ENCODE measurements at regions of chr6 and their contacts with region 1.

Region 1: DNA sequence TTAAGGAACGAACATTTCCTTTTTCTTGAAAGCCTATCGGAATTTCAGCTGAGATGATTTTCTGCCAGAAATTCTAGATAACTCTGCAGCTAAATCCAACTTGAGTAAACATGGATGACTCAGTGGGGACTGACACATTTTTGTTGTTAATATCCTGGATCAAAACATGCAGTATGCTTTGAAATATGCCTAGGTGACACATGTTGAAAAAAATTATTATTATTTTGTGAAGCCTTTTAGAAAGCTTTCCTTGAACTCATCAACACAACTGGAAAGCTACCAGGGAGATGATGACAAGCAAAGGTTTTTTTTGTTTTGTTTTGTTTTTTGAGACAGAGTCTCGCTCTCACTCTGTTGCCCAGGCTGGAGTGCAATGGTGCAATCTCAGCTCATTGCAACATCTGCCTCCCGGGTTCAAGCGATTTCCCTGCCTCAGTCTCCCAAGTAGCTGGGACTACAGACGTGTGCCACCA is 140.1 kb upstream of the SNX9 start:
- DNase-seq: no peak
- H3K4me3 ChIP-seq: no peak overlapping the region
- H3K27ac ChIP-seq: no peak overlapping the region
- H3K4me1 ChIP-seq: no peaks in the 10 kb centered on the region
- H3K27me3 ChIP-seq: no peaks in the 10 kb centered on the region
- CTCF ChIP-seq: no peak
- POLR2A ChIP-seq: no peak

Region 2: DNA sequence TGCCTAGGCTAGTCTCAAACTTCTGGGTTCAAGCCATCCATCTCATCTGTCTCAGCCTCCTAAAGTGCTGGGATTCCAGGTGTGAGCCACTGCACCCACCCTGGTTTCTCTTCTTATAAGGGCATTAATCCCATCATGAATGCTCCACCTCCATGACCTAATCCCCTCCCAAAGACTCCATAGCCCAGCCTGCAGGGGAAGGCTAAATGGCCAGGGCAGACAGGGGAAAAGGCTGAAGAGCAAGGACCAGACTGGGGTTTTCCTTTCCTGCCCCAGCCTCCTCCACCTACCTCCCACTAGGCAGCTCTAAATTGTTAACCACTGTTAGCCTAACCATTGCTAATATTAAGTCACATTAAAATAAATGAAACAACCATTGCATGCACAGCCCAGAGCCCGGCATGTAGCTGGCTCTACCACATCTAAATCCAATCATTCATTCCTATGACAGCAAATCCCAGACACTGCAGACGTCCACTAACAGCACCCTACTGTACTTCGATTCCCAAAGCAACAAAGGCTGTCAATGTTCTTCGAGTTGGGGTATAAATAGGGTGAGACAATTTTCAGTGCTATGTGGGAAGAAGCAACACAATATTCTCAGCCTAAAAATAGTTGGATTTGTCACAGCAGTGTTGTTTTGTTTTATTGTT is 1149.0 kb before region 1 on chr6:
- intact Hi-C with region 1: loop called (anchors 5 kb)
- DNase-seq: no peak
- H3K4me3 ChIP-seq: no peak overlapping the region
- H3K27ac ChIP-seq: no peak overlapping the region
- H3K4me1 ChIP-seq: no peaks in the 10 kb centered on the region
- H3K27me3 ChIP-seq: no peaks in the 10 kb centered on the region
- CTCF ChIP-seq: no peak
- POLR2A ChIP-seq: no peak

Measured in breast epithelium (tissue), 4 donors.